ENCODE measurements at regions of chr5 and their contacts with region 1.

Region 1: DNA sequence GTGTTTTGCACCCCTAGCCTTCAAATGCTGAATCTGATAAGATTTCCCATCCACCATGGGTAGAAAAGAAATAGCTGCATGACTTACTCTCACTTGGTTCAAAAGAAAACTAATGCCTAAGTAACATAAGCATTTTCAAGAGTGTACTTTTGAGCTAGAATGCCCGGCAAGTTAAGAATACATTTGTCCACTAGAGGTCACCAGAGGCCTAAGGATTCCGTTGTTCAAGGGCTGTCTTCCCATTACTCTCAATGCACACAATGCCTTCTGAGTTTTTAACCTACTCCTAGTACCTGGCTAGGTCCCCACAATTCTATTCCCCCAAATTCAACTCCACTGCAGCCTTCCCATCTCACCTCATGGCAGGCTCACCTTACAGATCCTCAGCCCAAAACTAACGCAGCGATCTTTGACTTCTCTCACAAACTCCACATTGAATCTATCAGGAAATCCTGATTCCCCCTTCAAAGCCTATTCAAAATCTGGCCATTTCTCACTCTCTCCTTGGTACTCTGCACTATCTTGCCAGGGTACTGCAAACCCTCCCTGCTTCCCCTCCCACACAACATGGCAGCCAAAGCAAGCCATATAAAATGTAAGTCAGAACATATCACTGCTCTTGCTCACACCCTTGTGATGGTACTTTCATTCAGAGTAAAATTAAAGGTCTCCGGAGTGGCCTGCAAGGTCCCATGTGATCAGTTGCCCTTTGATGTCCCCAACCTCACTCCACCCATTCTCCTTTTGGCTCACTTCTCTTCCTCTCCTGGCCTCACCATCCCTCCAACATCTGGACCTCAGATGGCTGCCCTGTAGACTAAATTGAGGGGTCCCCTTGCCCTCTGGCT is 13.4 kb downstream of the OXCT1 start:
- DNase-seq: peak; percentile 56
- H3K4me3 Mint-ChIP-seq: no peak overlapping the region
- H3K27ac Mint-ChIP-seq: no peak overlapping the region
- H3K4me1 Mint-ChIP-seq: peaks cover 35% of the 10 kb centered on the region
- H3K27me3 Mint-ChIP-seq: no peaks in the 10 kb centered on the region

Region 2: GRCh38 chr5:41356786-41357185 is 500.1 kb before region 1 on chr5:
- CTCF ChIA-PET with region 1: no interaction called
- POLR2A ChIA-PET with region 1: no interaction called
- intact Hi-C with region 1: no loop called
- DNase-seq: no peak
- H3K4me3 Mint-ChIP-seq: no peak overlapping the region
- H3K27ac Mint-ChIP-seq: no peak overlapping the region
- H3K4me1 Mint-ChIP-seq: no peaks in the 10 kb centered on the region
- H3K27me3 Mint-ChIP-seq: no peaks in the 10 kb centered on the region

Region 3: DNA sequence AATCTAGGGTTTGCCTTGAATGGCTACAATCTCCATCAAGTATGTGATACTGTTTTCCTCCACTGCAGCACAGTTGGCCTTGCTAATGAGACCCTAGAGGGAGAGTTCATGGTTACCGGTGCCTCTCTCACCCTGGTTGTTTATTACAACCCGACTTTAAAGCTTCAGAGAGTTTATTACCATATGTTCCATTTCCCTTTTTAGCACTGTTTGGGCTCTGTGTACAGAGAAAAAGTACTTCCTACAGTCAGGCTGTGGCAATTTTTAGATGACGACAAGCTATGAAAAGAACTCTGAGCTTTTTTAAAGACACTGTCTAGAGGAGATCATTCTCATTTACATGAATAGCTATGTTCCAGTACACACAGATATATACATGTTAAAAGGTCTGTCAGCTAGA is 297.7 kb before region 1 on chr5:
- CTCF ChIA-PET with region 1: no interaction called
- POLR2A ChIA-PET with region 1: no interaction called
- intact Hi-C with region 1: no loop called
- DNase-seq: no peak
- H3K4me3 Mint-ChIP-seq: no peak overlapping the region
- H3K27ac Mint-ChIP-seq: no peak overlapping the region
- H3K4me1 Mint-ChIP-seq: no peaks in the 10 kb centered on the region
- H3K27me3 Mint-ChIP-seq: no peaks in the 10 kb centered on the region

Region 4: GRCh38 chr5:41837793-41838192 is 19.1 kb before region 1 on chr5:
- CTCF ChIA-PET with region 1: interaction called, 34 read pairs
- POLR2A ChIA-PET with region 1: no interaction called
- intact Hi-C with region 1: no loop called
- DNase-seq: no peak
- H3K4me3 Mint-ChIP-seq: no peak overlapping the region
- H3K27ac Mint-ChIP-seq: no peak overlapping the region
- H3K4me1 Mint-ChIP-seq: peaks cover 26% of the 10 kb centered on the region
- H3K27me3 Mint-ChIP-seq: no peaks in the 10 kb centered on the region

Region 5: GRCh38 chr5:41893074-41893851 is 36.4 kb after region 1 on chr5:
- CTCF ChIA-PET with region 1: interaction called, 11 read pairs
- POLR2A ChIA-PET with region 1: no interaction called
- intact Hi-C with region 1: no loop called
- DNase-seq: no peak
- H3K4me3 Mint-ChIP-seq: peak overlapping the region; percentile 48
- H3K27ac Mint-ChIP-seq: no peak overlapping the region
- H3K4me1 Mint-ChIP-seq: peaks cover 17% of the 10 kb centered on the region
- H3K27me3 Mint-ChIP-seq: peaks cover 16% of the 10 kb centered on the region

Region 6: GRCh38 chr5:41924872-41925554 is 68.1 kb after region 1 on chr5 and contains the start of gene FBXO4:
- CTCF ChIA-PET with region 1: interaction called, 24 read pairs
- POLR2A ChIA-PET with region 1: no interaction called
- intact Hi-C with region 1: loop called (anchors 1 kb)
- DNase-seq: peak; percentile 93
- H3K4me3 Mint-ChIP-seq: peak within 1 kb of the TSS; percentile 90
- H3K27ac Mint-ChIP-seq: peak within 1 kb of the TSS; percentile 92
- H3K4me1 Mint-ChIP-seq: peaks cover 23% of the 10 kb centered on the region
- H3K27me3 Mint-ChIP-seq: no peaks in the 10 kb centered on the region
- total RNA-seq, gene FBXO4: 20.4 to 21.7 TPM

Region 7: DNA sequence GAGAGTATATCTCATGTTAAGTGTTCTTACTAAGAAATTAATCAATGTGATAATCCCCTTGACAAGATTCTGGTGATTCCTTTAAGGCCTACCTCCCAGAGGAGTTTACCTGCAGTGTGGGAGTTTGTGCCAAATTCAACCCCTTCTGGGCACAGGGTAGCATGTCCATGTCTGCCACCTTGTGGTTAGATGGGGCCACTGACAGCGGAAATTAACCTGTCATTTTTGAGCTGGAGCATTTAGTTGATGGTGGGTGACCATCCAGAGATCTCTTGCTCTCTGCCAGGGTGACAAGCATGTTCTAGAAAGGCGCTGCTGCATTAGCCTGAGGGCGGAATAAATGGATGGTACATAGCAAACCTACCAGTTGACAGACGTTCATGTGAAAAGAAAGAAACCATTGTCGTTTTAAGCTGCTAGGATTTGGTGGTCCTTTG is 200.4 kb after region 1 on chr5:
- CTCF ChIA-PET with region 1: interaction called, 169 read pairs
- POLR2A ChIA-PET with region 1: no interaction called
- intact Hi-C with region 1: loop called (anchors 1 kb)
- DNase-seq: peak; percentile 68
- H3K4me3 Mint-ChIP-seq: no peak overlapping the region
- H3K27ac Mint-ChIP-seq: no peak overlapping the region
- H3K4me1 Mint-ChIP-seq: no peaks in the 10 kb centered on the region
- H3K27me3 Mint-ChIP-seq: peaks cover 4% of the 10 kb centered on the region